Mammary epithelial cell (primary cell): ENCODE measurements at regions of chr12 and their contacts with region 1.

Region 1: DNA sequence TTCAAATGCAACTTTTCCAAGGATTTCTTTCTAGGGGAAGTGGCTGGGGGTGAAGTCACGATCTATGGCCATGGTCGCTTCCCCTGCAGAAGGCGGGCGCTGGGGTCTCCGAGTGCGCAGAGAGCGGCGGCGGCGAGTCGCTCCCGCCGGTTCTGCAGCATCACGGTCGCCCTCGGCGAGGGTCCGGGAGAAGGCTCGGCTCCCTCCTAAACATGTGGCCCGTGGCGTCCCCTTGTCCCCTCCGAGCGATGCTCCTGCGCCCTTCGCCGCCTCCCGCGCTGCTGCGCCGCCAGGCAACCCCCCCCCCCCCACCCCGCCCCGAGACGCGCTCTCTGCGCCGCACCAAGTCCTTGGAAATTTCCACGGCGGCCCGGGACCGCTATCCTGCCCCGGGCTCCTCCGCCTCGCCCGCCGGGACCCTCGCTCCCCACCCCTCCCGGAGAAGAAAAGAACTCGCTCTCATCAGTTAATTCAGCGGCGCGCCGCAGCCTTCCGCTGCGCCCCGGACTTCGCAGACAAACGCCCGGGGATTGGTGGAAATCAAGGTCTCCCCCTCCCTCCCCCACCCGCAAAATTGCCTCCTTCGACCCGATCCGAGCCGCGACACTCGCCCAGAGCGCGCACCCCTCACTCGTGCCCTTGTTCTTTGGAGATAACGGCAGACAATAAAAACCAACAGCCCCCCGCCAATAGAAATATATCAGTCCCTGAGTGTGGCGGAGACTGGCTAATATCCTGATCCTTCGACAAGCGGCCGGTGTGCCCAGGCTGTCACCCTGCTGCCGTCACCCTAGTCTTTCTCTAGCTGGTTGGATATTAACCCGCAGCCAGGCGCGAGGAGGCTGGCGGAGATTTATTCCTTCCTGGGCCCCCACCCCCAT is at the start of gene ST8SIA1:
- DNase-seq: peak; percentile 34
- H3K4me3 ChIP-seq: peak within 1 kb of the TSS; percentile 67 to 83 (median 79)
- H3K27ac ChIP-seq: peak within 1 kb of the TSS; percentile 47
- H3K4me1 ChIP-seq: peaks cover 15% of the 10 kb centered on the region
- H3K27me3 ChIP-seq: peaks cover 5% of the 10 kb centered on the region
- CTCF ChIP-seq: no peak
- total RNA-seq, gene ST8SIA1: 0.50 to 0.87 TPM

Region 2: DNA sequence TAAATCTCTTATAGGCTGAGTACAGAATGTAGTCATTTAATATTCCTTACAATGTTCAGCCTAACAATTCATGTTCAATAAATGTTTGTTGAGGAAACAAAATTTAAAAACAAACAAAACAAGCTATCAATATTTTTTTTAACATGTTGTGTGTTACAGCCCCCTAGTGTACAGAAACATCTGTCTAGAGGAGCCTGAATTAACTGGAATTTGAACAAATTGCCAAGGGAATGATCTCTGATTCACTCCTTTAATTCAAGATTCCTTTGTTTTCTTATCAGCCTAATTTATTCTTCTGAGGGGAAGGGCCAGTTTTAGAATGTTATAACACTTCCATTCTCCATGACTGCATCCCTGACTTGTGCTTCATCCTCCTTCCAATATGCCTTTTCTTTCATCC is 161.5 kb before region 1 on chr12:
- CTCF ChIA-PET with region 1: interaction called, 8 read pairs
- dilution Hi-C with region 1: no loop called
- in situ Hi-C with region 1: no loop called
- intact Hi-C with region 1: loop called (anchors 1 kb)
- DNase-seq: no peak
- H3K4me3 ChIP-seq: no peak overlapping the region
- H3K27ac ChIP-seq: no peak overlapping the region
- H3K4me1 ChIP-seq: no peaks in the 10 kb centered on the region
- H3K27me3 ChIP-seq: no peaks in the 10 kb centered on the region
- CTCF ChIP-seq: peak; percentile 32 to 50

Region 3: DNA sequence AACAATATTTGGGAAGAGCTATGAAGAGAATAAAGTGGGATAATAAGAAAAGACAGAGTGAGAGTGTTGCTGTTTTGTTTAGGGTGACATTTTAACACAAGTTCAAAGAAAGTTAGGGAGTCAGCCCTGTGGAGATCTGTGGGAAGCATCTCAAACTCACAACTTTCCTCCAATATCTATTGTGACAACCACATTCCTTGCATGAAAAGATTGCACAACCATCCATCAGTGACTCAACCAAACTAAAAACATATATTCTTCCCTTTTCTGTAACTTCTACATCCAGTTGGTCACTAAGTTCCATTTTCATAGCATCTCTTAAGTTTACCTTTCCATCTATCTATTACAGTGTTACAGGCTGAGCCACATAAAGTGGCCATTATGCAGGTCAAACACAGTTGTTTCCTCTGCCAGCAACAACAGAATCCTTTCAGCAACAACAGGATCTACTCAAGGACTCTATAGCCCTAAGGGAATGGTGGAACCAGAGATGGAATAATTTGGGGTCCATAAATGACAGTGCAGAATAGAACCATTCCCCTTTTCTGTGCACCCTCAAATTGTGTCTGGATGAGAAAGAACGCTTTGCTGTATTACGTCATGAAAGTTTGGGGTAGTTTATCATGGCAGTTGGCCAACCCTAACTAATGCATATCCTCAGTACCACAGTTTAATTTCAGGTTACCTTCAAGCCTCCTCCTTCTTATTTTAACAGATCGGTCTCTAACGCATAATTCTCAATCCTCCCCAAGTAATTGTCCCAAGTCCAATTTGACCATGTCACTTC is 119.0 kb before region 1 on chr12:
- CTCF ChIA-PET with region 1: no interaction called
- dilution Hi-C with region 1: no loop called
- in situ Hi-C with region 1: loop called in 1 of 2 experiments (anchors 25 kb)
- intact Hi-C with region 1: no loop called
- DNase-seq: no peak
- H3K4me3 ChIP-seq: no peak overlapping the region
- H3K27ac ChIP-seq: no peak overlapping the region
- H3K4me1 ChIP-seq: no peaks in the 10 kb centered on the region
- H3K27me3 ChIP-seq: no peaks in the 10 kb centered on the region
- CTCF ChIP-seq: no peak

Region 4: DNA sequence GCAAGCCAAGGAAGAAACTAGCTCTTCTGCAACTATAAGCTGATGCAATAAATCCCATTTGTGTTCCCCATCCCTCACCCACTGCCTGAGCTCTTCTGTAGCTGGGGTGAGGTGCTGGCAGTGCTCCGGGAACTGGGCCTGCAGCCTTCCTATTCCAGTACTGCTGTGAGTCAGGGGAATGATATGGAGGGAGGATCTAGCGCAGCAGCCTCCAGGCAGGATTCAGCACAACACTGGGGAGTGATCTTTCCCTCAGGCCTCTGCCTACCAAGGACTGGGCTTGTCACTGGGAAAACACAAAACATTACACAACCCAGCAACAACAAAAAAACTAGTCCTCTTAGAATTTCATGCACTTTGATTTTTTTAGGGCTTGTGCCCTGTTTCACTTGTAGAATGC is 58.8 kb before region 1 on chr12:
- CTCF ChIA-PET with region 1: no interaction called
- dilution Hi-C with region 1: loop called (anchors 5 kb)
- in situ Hi-C with region 1: no loop called
- intact Hi-C with region 1: loop called (anchors 2 kb)
- DNase-seq: peak; percentile 97
- H3K4me3 ChIP-seq: no peak overlapping the region
- H3K27ac ChIP-seq: peak overlapping the region; percentile 95
- H3K4me1 ChIP-seq: peaks cover 27% of the 10 kb centered on the region
- H3K27me3 ChIP-seq: no peaks in the 10 kb centered on the region
- CTCF ChIP-seq: no peak